GM12878 (cell line): ENCODE measurements at regions of chr3 and their contacts with region 1.

Region 1: DNA sequence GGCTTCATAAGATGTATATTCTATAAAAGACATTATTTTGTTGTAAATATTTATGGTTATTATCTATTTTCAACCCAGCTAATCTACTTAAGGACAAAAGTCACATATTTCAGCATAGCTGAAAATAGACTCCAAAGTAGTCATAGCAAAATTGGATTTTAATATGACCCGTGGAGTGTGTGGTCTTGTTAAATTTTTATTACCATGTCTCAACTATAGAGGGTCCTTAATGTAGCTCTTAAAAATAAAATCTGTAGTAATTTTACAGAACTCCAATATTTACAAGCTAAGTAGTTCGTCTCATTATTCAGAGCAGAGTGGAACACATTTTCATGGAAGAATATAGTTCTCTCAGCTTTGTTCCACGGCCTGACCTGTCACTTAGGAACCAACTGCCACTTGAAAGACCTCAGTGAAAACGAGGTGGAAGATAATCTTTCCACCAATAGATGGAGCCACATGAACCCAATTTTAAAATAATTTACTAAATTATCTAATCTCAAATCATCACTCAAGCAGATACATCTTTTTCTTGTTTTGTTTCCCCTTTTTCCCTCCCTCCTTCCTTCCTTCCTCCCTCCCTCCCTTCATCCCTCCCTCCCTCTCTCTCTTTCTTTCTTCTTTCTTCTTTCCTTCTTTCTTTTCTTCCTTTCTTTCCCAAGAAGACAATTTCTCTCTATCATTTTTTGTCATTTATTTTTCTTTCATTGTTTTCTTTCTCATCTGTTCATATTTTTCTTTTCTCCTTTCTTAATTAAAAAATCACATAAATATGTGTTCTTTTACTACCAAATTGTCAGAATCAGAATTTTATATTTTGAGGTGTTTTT is 97.2 kb downstream of the CLDN1 start:
- DNase-seq: no peak
- ATAC-seq: peak; percentile 45
- H3K4me3 ChIP-seq: no peak overlapping the region
- H3K27ac ChIP-seq: no peak overlapping the region
- H3K4me1 ChIP-seq: no peaks in the 10 kb centered on the region
- H3K27me3 ChIP-seq: no peaks in the 10 kb centered on the region
- CTCF ChIP-seq: peak; percentile 13 to 38 (median 16); a peak in 3 of 6 replicates
- EP300 ChIP-seq: no peak
- POLR2A ChIP-seq: no peak
- RAD21 ChIP-seq: peak; percentile 60

Region 2: DNA sequence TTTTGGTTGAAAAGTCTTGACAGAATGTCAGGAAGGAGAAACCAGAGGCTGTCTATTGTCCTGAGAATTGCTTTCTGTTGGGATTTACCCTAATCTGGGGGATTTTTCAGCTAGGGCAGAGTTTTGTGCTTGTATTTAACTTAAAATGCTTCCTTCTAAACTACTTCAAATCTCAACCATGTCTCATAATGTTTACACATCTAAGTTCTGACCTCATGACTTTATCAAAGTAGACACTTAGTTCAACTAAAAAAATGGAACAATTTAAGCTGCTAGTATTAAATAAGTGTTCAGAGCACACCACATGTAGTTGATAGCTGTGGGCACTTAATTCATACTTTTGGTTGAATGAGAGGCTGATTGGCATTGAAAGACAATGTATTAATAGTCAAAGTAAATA is 69.0 kb after region 1 on chr3:
- CTCF ChIA-PET with region 1: interaction called, 4 read pairs
- POLR2A ChIA-PET with region 1: interaction called, 3 read pairs
- RAD21 ChIA-PET with region 1: interaction called, 11 read pairs
- SMC1A ChIA-PET with region 1: interaction called, 8 read pairs
- in situ Hi-C with region 1: no loop called
- intact Hi-C with region 1: no loop called
- DNase-seq: no peak
- ATAC-seq: peak; percentile 40
- H3K4me3 ChIP-seq: no peak overlapping the region
- H3K27ac ChIP-seq: no peak overlapping the region
- H3K4me1 ChIP-seq: no peaks in the 10 kb centered on the region
- H3K27me3 ChIP-seq: no peaks in the 10 kb centered on the region
- CTCF ChIP-seq: no peak
- EP300 ChIP-seq: no peak
- POLR2A ChIP-seq: no peak
- RAD21 ChIP-seq: no peak

Region 3: DNA sequence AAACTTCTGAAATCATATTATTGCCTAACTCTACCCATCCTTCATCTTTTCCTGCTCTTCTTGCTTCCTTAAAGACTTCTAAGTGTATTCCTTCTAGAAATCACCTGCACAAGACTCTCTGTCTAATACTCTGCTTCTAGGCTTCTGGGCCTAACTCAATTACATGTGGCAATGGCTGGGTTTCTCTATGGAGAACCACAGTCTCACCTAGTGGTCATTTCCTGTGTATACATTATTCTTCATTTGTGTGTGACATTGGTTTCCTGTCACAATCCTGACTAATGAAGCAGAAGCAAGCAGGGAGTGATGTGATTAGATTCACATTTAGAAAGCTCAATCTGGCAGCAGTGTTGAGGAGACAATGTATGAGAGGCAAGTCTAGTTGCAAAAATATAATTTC is 114.1 kb after region 1 on chr3:
- CTCF ChIA-PET with region 1: interaction called, 10 read pairs
- POLR2A ChIA-PET with region 1: no interaction called
- RAD21 ChIA-PET with region 1: interaction called, 23 read pairs
- SMC1A ChIA-PET with region 1: interaction called, 9 read pairs
- in situ Hi-C with region 1: no loop called
- intact Hi-C with region 1: no loop called
- DNase-seq: peak; percentile 11
- ATAC-seq: peak; percentile 95
- H3K4me3 ChIP-seq: no peak overlapping the region
- H3K27ac ChIP-seq: no peak overlapping the region
- H3K4me1 ChIP-seq: no peaks in the 10 kb centered on the region
- H3K27me3 ChIP-seq: no peaks in the 10 kb centered on the region
- CTCF ChIP-seq: peak; percentile 21 to 34 (median 28); a peak in 4 of 6 replicates
- EP300 ChIP-seq: no peak
- POLR2A ChIP-seq: no peak
- RAD21 ChIP-seq: peak; percentile 62

Region 4: DNA sequence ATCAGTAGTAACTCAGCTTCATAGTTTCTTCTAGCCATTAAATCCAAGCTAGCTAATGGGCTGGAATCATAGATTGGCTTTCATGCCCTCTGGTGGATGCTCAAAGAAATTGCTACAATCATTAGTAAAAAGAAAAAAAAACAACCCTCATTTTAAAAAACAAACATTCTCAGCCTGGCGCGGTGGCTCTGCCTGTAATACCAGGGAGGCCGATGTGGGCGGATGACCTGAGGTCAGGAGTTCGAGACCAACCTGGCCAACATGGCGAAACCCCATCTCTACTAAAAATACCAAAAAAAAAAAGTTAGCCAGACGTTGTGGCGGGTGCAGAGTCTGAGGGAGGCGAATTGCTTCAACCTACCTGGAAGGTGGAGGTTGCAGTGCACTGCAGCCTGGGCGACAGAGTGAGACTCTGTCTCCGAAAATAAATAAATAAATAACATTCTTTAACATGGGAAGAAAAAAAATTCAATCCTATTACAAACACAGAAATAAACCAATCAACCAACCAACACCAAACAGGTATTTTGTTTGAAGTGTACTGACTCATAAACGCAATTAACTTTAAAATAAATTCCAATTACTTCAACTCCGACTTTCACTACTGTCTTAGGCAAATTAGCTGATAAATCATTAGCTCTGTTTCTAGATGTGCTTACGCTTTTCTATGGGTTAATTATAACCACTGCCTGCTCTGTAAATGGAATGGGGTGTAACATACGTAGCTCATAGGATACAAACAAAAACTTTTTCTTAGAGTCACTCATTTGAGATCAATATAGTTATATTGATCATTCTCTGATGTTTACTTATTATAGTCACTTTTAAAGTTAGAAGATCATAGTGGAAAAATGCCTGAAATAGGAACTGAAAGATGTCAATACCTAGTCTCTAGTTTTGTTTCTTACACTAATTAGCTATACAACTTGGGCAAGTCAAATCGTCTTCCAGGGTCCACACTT is 199.7 kb after region 1 on chr3:
- CTCF ChIA-PET with region 1: interaction called, 98 read pairs
- POLR2A ChIA-PET with region 1: no interaction called
- RAD21 ChIA-PET with region 1: interaction called, 38 read pairs
- SMC1A ChIA-PET with region 1: interaction called, 71 read pairs
- in situ Hi-C with region 1: no loop called
- intact Hi-C with region 1: loop called (anchors 1 kb)
- DNase-seq: peak; percentile 20
- ATAC-seq: peak; percentile 90
- H3K4me3 ChIP-seq: no peak overlapping the region
- H3K27ac ChIP-seq: no peak overlapping the region
- H3K4me1 ChIP-seq: peaks cover 6% of the 10 kb centered on the region
- H3K27me3 ChIP-seq: no peaks in the 10 kb centered on the region
- CTCF ChIP-seq: peak; percentile 48 to 59 (median 53); a peak in 5 of 6 replicates
- EP300 ChIP-seq: no peak
- POLR2A ChIP-seq: no peak
- RAD21 ChIP-seq: peak; percentile 69

Region 5: DNA sequence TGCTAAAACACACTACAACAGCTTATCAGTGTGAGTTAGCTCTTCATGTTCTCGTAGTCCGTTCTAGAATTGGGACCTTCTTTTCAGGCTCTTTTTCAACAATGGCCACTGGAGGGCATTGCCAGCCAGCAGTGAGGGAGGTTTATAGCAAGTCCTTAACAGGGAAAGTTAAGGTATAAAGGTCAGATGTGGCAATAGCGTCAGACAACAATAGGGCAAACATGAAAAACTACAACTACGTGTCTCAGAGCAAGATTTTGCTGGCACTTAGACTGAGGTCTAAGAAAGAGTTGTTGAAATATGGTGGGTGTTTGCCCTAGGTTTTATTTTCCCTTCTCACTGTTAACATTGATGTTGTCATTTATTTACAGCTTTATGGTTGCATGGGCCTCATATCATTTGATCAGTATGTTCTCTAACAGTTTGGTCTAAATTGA is 476.0 kb after region 1 on chr3:
- CTCF ChIA-PET with region 1: interaction called, 9 read pairs
- POLR2A ChIA-PET with region 1: no interaction called
- RAD21 ChIA-PET with region 1: no interaction called
- SMC1A ChIA-PET with region 1: interaction called, 3 read pairs
- in situ Hi-C with region 1: no loop called
- intact Hi-C with region 1: loop called (anchors 10 kb)
- DNase-seq: no peak
- ATAC-seq: peak; percentile 73
- H3K4me3 ChIP-seq: no peak overlapping the region
- H3K27ac ChIP-seq: no peak overlapping the region
- H3K4me1 ChIP-seq: no peaks in the 10 kb centered on the region
- H3K27me3 ChIP-seq: no peaks in the 10 kb centered on the region
- CTCF ChIP-seq: peak; percentile 45 to 47 (median 47)
- EP300 ChIP-seq: no peak
- POLR2A ChIP-seq: no peak
- RAD21 ChIP-seq: peak; percentile 49